ENCODE measurements at regions of chr7 and their contacts with region 1.

Region 1: GRCh38 chr7:106461993-106462859 is 177.4 kb upstream of the NAMPT start:
- DNase-seq: no peak
- ATAC-seq: peak; percentile 62
- H3K4me3 Mint-ChIP-seq: no peak overlapping the region
- H3K27ac Mint-ChIP-seq: no peak overlapping the region
- H3K4me1 Mint-ChIP-seq: peaks cover 14% of the 10 kb centered on the region
- H3K27me3 Mint-ChIP-seq: no peaks in the 10 kb centered on the region
- CTCF ChIP-seq: no peak

Region 2: GRCh38 chr7:106166655-106167342 is 295.4 kb before region 1 on chr7:
- CTCF ChIA-PET with region 1: interaction called, 11 read pairs
- POLR2A ChIA-PET with region 1: no interaction called
- intact Hi-C with region 1: no loop called
- DNase-seq: no peak
- ATAC-seq: peak; percentile 54
- H3K4me3 Mint-ChIP-seq: no peak overlapping the region
- H3K27ac Mint-ChIP-seq: no peak overlapping the region
- H3K4me1 Mint-ChIP-seq: peaks cover 10% of the 10 kb centered on the region
- H3K27me3 Mint-ChIP-seq: peaks cover 2% of the 10 kb centered on the region
- CTCF ChIP-seq: peak; percentile 77

Region 3: GRCh38 chr7:106176414-106177299 is 285.6 kb before region 1 on chr7:
- CTCF ChIA-PET with region 1: interaction called, 228 read pairs
- POLR2A ChIA-PET with region 1: interaction called, 11 read pairs
- intact Hi-C with region 1: loop called (anchors 1 kb)
- DNase-seq: peak; percentile 64
- ATAC-seq: peak; percentile 91
- H3K4me3 Mint-ChIP-seq: no peak overlapping the region
- H3K27ac Mint-ChIP-seq: no peak overlapping the region
- H3K4me1 Mint-ChIP-seq: peaks cover 11% of the 10 kb centered on the region
- H3K27me3 Mint-ChIP-seq: peaks cover 4% of the 10 kb centered on the region
- CTCF ChIP-seq: peak; percentile 41

Region 4: GRCh38 chr7:106273009-106273668 is 189.1 kb before region 1 on chr7:
- CTCF ChIA-PET with region 1: interaction called, 12 read pairs
- POLR2A ChIA-PET with region 1: no interaction called
- intact Hi-C with region 1: no loop called
- DNase-seq: no peak
- ATAC-seq: no peak
- H3K4me3 Mint-ChIP-seq: no peak overlapping the region
- H3K27ac Mint-ChIP-seq: no peak overlapping the region
- H3K4me1 Mint-ChIP-seq: no peaks in the 10 kb centered on the region
- H3K27me3 Mint-ChIP-seq: no peaks in the 10 kb centered on the region
- CTCF ChIP-seq: no peak

Region 5: DNA sequence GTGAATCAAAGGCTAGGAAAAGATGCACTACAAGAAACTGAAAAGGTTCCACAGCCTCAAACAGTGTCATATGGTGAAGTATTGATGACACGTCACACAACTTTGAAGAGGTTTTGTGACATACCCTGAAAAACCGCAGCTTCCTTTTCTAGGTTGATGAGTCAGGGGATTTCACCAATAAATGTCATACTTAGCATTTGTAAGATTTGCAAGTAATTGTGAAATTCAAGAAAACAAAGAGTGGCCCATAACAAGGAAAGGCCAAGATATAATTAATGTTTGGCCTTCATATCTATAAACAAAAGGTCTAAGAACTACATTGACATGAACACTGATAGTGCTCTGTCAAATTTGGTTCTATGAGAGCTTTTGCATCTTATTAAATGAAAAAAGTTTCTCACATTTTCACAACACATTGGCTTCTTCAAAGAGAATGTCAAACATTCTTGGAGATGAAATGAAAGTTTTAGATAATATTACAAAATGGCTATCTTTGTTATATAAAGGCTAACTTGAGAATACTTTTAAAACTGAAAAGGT is 115.5 kb before region 1 on chr7:
- CTCF ChIA-PET with region 1: no interaction called
- POLR2A ChIA-PET with region 1: no interaction called
- intact Hi-C with region 1: loop called (anchors 5 kb)
- DNase-seq: no peak
- ATAC-seq: peak; percentile 82
- H3K4me3 Mint-ChIP-seq: no peak overlapping the region
- H3K27ac Mint-ChIP-seq: peak overlapping the region; percentile 74
- H3K4me1 Mint-ChIP-seq: peaks cover 27% of the 10 kb centered on the region
- H3K27me3 Mint-ChIP-seq: peaks cover 6% of the 10 kb centered on the region
- CTCF ChIP-seq: no peak